SK-N-SH (cell line): ENCODE measurements at regions of chrX and their contacts with region 1.

Region 1: DNA sequence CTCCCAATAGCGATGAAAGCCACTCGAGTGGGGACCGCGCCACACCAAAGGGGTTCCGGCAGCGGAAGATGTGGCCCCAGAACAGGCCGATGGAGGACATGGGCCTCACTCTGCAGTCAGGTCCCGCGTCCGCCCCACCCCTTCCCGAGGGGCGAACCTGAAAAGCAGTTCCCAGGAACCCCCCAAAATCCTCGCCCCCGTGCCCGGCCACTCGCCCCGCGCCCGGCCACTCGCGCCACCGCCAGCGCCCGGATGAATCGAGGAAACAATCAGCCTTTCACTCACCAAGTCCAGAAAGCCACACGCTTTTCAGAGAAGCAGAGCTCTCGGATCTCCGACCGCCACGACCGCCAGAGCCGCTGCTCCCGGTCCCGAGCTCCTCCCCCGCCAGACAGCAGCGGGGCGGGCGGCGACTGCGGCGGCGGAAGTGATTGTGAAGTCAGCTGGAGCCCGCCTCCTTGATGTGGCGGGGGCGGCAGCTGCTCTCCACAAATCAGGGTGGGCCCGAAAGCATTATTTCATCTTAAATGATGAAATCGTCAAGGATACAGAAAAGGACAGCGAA is at the start of gene PJA1:
- DNase-seq: peak; percentile 88
- H3K4me3 ChIP-seq: peak within 1 kb of the TSS; percentile 68 to 81
- H3K27ac ChIP-seq: peak within 1 kb of the TSS; percentile 40 to 67
- H3K4me1 ChIP-seq: peaks cover 3% of the 10 kb centered on the region in 2 experiments; a peak in 1 of 4 replicates
- H3K27me3 ChIP-seq: peaks cover 11% of the 10 kb centered on the region; the same call in 1 of the 2 replicates
- CTCF ChIP-seq: no peak
- EP300 ChIP-seq: no peak
- RAD21 ChIP-seq: peak; percentile 10; the same call in 1 of the 2 replicates
- polyA plus RNA-seq, gene PJA1: 15.7 and 16.5 TPM in 2 replicates

Region 2: GRCh38 chrX:69179380-69179911 is 14.3 kb after region 1 on chrX:
- CTCF ChIA-PET with region 1: interaction called, 3 read pairs
- POLR2A ChIA-PET with region 1: interaction called, 10 read pairs
- DNase-seq: peak; percentile 72
- H3K4me3 ChIP-seq: no peak overlapping the region
- H3K27ac ChIP-seq: no peak overlapping the region; a peak in 1 of 4 replicates
- H3K4me1 ChIP-seq: peaks cover 0 to 11% of the 10 kb centered on the region in 2 experiments; a peak in 1 of 4 replicates
- H3K27me3 ChIP-seq: peaks cover 27% of the 10 kb centered on the region
- CTCF ChIP-seq: no peak
- EP300 ChIP-seq: no peak
- RAD21 ChIP-seq: no peak